Endothelial cell of umbilical vein (primary cell): ENCODE measurements at regions of chr17 and their contacts with region 1.

Region 1: GRCh38 chr17:80426681-80427326 is 11.8 kb downstream of the ENDOV start:
- DNase-seq: peak; percentile 54
- H3K4me3 ChIP-seq: no peak overlapping the region
- H3K27ac ChIP-seq: no peak overlapping the region
- H3K4me1 ChIP-seq: no peaks in the 10 kb centered on the region
- H3K27me3 ChIP-seq: no peaks in the 10 kb centered on the region
- CTCF ChIP-seq: peak; percentile 98
- POLR2A ChIP-seq: no peak

Region 2: GRCh38 chr17:80254396-80255251 is 172.2 kb before region 1 on chr17:
- CTCF ChIA-PET with region 1: no interaction called
- POLR2A ChIA-PET with region 1: no interaction called
- dilution Hi-C with region 1: no loop called
- intact Hi-C with region 1: no loop called
- DNase-seq: peak; percentile 83
- H3K4me3 ChIP-seq: no peak overlapping the region
- H3K27ac ChIP-seq: peak overlapping the region; percentile 93
- H3K4me1 ChIP-seq: peaks cover 20% of the 10 kb centered on the region
- H3K27me3 ChIP-seq: no peaks in the 10 kb centered on the region
- CTCF ChIP-seq: no peak
- POLR2A ChIP-seq: no peak

Region 3: GRCh38 chr17:80454557-80455335 is 27.9 kb after region 1 on chr17:
- CTCF ChIA-PET with region 1: interaction called, 12 read pairs
- POLR2A ChIA-PET with region 1: no interaction called
- dilution Hi-C with region 1: no loop called
- intact Hi-C with region 1: no loop called
- DNase-seq: peak; percentile 94
- H3K4me3 ChIP-seq: peak overlapping the region; percentile 40 to 69 (median 56)
- H3K27ac ChIP-seq: peak overlapping the region; percentile 72
- H3K4me1 ChIP-seq: peaks cover 9% of the 10 kb centered on the region
- H3K27me3 ChIP-seq: peaks cover 0 to 6% of the 10 kb centered on the region in 2 experiments
- CTCF ChIP-seq: no peak
- POLR2A ChIP-seq: peak; percentile 97

Region 4: DNA sequence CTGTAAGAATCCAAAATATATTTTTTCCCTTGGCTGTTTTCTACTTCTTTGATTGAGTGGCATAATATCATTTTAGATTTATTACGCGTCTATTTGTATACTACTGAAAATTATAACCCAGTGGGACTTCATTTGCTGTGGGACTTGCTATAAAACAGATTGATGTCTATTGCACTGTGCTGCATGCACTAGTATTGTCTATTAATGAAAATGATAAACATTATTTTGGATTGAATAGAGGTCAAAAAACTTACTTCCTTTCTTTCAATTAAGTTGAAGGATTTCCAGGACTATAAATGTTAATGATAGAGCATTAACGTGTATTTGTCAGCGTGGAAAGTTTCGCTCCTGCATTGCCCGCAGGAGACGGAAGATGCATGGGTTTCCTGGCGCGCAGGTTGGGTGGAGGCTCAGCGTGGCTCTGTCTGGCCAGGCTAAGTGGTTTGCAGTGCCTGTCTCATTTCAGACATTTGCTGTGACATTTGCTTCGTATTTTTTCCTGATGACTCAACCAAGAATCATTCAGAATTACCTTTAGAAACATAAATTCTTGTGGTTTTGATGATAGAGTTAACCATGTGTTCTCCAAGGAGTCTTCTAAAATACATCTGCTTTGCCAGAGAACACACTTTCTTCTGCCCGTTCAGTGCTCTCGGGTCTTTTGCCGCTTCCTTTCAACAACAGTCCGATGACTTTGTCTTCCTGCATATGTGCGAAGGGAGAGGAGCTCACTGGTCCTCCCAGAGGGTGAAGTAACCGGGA is 334.5 kb after region 1 on chr17:
- CTCF ChIA-PET with region 1: interaction called, 4 read pairs
- POLR2A ChIA-PET with region 1: no interaction called
- dilution Hi-C with region 1: no loop called
- intact Hi-C with region 1: loop called (anchors 10 kb)
- DNase-seq: peak; percentile 87
- H3K4me3 ChIP-seq: peak overlapping the region in 1 of 3 experiments; percentile 7
- H3K27ac ChIP-seq: peak overlapping the region; percentile 78
- H3K4me1 ChIP-seq: peaks cover 59% of the 10 kb centered on the region
- H3K27me3 ChIP-seq: no peaks in the 10 kb centered on the region
- CTCF ChIP-seq: no peak
- POLR2A ChIP-seq: peak; percentile 49

Region 5: DNA sequence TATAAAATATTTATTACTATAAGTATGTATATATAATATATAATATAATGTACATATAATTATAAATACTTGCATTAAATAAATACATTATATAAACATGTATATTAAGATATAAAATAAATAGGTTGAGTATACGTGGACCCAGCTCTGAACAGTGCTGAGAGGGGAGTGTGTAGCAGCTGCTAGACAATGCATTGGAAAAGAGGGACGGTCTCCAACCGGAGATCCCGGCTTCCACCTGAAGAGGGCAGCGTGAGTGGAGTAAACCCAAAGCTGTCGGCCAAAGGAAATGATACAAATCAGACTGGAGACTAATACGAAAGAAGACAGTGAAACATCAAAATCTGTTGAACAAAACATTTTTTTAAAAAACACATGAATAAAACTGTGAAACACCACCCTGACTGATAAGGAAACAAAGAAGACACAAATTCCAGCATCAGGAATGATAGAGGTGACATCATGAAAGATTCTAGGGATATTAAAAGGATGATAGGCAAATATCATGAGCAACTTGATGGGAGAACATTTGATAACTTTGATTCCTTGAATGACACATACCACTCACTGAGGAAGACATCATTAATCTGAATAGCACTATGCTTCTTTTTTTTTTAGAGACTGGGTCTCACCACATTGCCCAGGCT is 439.5 kb after region 1 on chr17:
- CTCF ChIA-PET with region 1: interaction called, 8 read pairs
- POLR2A ChIA-PET with region 1: no interaction called
- dilution Hi-C with region 1: no loop called
- intact Hi-C with region 1: loop called (anchors 1 kb)
- DNase-seq: peak; percentile 84
- H3K4me3 ChIP-seq: no peak overlapping the region
- H3K27ac ChIP-seq: no peak overlapping the region
- H3K4me1 ChIP-seq: peaks cover 5% of the 10 kb centered on the region
- H3K27me3 ChIP-seq: no peaks in the 10 kb centered on the region
- CTCF ChIP-seq: peak; percentile 75 to 83
- POLR2A ChIP-seq: no peak

Region 6: GRCh38 chr17:80899402-80900268 is 472.8 kb after region 1 on chr17:
- CTCF ChIA-PET with region 1: interaction called, 43 read pairs
- POLR2A ChIA-PET with region 1: no interaction called
- dilution Hi-C with region 1: no loop called
- intact Hi-C with region 1: loop called (anchors 1 kb)
- DNase-seq: peak; percentile 22
- H3K4me3 ChIP-seq: no peak overlapping the region
- H3K27ac ChIP-seq: no peak overlapping the region
- H3K4me1 ChIP-seq: peaks cover 18% of the 10 kb centered on the region
- H3K27me3 ChIP-seq: no peaks in the 10 kb centered on the region
- CTCF ChIP-seq: peak; percentile 53 to 69
- POLR2A ChIP-seq: no peak

Region 7: GRCh38 chr17:80970044-80970761 is 543.4 kb after region 1 on chr17:
- CTCF ChIA-PET with region 1: interaction called, 53 read pairs
- POLR2A ChIA-PET with region 1: no interaction called
- dilution Hi-C with region 1: no loop called
- intact Hi-C with region 1: no loop called
- DNase-seq: no peak
- H3K4me3 ChIP-seq: no peak overlapping the region
- H3K27ac ChIP-seq: no peak overlapping the region
- H3K4me1 ChIP-seq: no peaks in the 10 kb centered on the region
- H3K27me3 ChIP-seq: no peaks in the 10 kb centered on the region
- CTCF ChIP-seq: peak; percentile 12 to 44
- POLR2A ChIP-seq: no peak

Region 8: DNA sequence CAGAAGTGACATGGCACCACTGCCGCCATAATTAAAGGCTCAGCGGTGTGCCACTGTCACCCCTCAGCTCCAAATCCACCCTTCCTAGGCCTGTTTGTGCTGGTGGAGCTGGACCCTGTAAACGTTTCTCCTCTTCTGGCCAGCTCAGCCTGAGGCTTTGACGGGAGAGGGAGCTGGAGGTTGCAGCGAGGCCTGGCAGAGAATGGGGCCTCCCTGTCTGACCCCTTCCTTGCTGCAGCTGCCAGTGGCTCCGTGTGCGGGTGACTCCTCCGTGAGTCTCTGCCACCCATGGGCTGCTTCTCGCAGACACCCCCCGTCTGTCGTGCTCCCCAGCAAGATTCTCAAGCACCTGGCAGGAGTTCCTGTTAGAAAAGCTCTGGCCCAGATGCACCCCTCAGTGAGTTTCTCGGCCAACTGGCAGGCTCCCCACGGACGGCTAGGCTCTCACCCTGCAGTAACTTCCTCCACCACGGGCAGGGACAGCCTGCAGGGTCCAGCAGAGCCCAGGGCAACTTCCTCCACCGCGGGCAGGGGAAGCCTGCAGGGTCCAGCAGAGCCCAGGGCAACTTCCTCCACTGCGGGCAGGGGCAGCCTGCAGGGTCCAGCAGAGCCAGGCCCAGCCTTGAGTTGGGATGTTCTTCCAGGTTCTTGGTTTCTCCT is 560.1 kb after region 1 on chr17:
- CTCF ChIA-PET with region 1: interaction called, 41 read pairs
- POLR2A ChIA-PET with region 1: no interaction called
- dilution Hi-C with region 1: no loop called
- intact Hi-C with region 1: no loop called
- DNase-seq: no peak
- H3K4me3 ChIP-seq: no peak overlapping the region
- H3K27ac ChIP-seq: no peak overlapping the region
- H3K4me1 ChIP-seq: no peaks in the 10 kb centered on the region
- H3K27me3 ChIP-seq: no peaks in the 10 kb centered on the region
- CTCF ChIP-seq: no peak
- POLR2A ChIP-seq: no peak